ENCODE measurements at regions of chrX and their contacts with region 1.

Region 1: GRCh38 chrX:134520860-134521390 is 61.0 kb downstream of the HPRT1 start:
- DNase-seq: no peak
- ATAC-seq: peak; percentile 91
- H3K4me3 ChIP-seq: no peak overlapping the region
- H3K27ac ChIP-seq: no peak overlapping the region
- H3K4me1 ChIP-seq: no peaks in the 10 kb centered on the region
- H3K27me3 ChIP-seq: no peaks in the 10 kb centered on the region
- CTCF ChIP-seq: peak; percentile 56 to 65 (median 59)
- EP300 ChIP-seq: no peak
- POLR2A ChIP-seq: no peak
- RAD21 ChIP-seq: peak; percentile 78

Region 2: DNA sequence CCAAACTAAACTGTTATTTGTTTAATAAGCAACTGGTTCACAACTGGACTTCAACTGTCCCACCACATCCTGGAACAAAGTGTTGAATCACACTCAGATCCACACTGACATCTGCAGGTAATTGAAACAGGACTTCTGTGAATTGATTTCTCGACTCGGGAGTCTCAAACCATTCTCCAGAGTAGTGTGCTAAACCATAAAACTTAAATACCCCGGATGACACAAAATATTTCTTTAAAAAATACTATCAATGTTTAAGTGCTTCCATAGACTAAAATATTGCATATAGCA is 232.7 kb after region 1 on chrX:
- CTCF ChIA-PET with region 1: interaction called, 5 read pairs
- POLR2A ChIA-PET with region 1: no interaction called
- RAD21 ChIA-PET with region 1: interaction called, 3 read pairs
- SMC1A ChIA-PET with region 1: no interaction called
- in situ Hi-C with region 1: no loop called
- intact Hi-C with region 1: loop called (anchors 5 kb)
- DNase-seq: no peak
- ATAC-seq: no peak
- H3K4me3 ChIP-seq: no peak overlapping the region
- H3K27ac ChIP-seq: no peak overlapping the region
- H3K4me1 ChIP-seq: no peaks in the 10 kb centered on the region
- H3K27me3 ChIP-seq: no peaks in the 10 kb centered on the region
- CTCF ChIP-seq: peak in 1 of 3 experiments; percentile 13; a peak in 1 of 6 replicates
- EP300 ChIP-seq: no peak
- POLR2A ChIP-seq: no peak
- RAD21 ChIP-seq: peak; percentile 31

Region 3: GRCh38 chrX:134764212-134764785 is 243.4 kb after region 1 on chrX:
- CTCF ChIA-PET with region 1: interaction called, 13 read pairs
- POLR2A ChIA-PET with region 1: no interaction called
- RAD21 ChIA-PET with region 1: no interaction called
- SMC1A ChIA-PET with region 1: interaction called, 6 read pairs
- in situ Hi-C with region 1: no loop called
- intact Hi-C with region 1: no loop called
- DNase-seq: no peak
- ATAC-seq: peak; percentile 92
- H3K4me3 ChIP-seq: no peak overlapping the region
- H3K27ac ChIP-seq: no peak overlapping the region
- H3K4me1 ChIP-seq: no peaks in the 10 kb centered on the region
- H3K27me3 ChIP-seq: no peaks in the 10 kb centered on the region
- CTCF ChIP-seq: peak in 2 of 3 experiments; percentile 25 to 27; a peak in 2 of 6 replicates
- EP300 ChIP-seq: no peak
- POLR2A ChIP-seq: no peak
- RAD21 ChIP-seq: no peak

Region 4: GRCh38 chrX:134782796-134783195 is 261.9 kb after region 1 on chrX:
- CTCF ChIA-PET with region 1: interaction called, 19 read pairs
- POLR2A ChIA-PET with region 1: no interaction called
- RAD21 ChIA-PET with region 1: interaction called, 3 read pairs
- SMC1A ChIA-PET with region 1: interaction called, 6 read pairs
- in situ Hi-C with region 1: no loop called
- intact Hi-C with region 1: loop called (anchors 2 kb)
- DNase-seq: no peak
- ATAC-seq: no peak
- H3K4me3 ChIP-seq: no peak overlapping the region
- H3K27ac ChIP-seq: no peak overlapping the region
- H3K4me1 ChIP-seq: no peaks in the 10 kb centered on the region
- H3K27me3 ChIP-seq: no peaks in the 10 kb centered on the region
- CTCF ChIP-seq: peak; percentile 34 to 50 (median 41)
- EP300 ChIP-seq: no peak
- POLR2A ChIP-seq: no peak
- RAD21 ChIP-seq: peak; percentile 35

Measured in GM12878 (cell line).